ENCODE measurements at regions of chr1 and their contacts with region 1.

Region 1: DNA sequence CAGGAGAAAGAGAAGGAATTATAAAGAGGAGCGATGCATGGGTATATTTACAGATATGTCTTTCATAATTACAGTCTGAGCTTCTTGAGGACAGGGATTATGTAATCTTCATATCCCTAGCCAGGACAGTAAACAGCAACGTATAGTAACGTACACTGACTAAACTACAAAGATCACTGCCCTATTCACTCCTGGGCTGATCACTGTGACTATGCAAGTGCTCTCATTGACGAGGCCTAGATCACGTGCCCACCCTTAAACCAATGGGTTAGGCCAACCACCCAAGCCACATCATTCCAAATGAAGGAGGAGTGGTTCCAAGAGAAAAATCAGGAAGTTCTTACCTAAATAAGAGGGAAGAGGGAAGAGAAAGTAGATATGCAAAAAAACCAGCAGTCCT is 18.5 kb downstream of the PIK3R3 start:
- DNase-seq: no peak
- H3K4me3 ChIP-seq: no peak overlapping the region
- H3K27ac ChIP-seq: peak overlapping the region in 1 of 2 donors; percentile 8
- H3K4me1 ChIP-seq: no peaks in the 10 kb centered on the region
- H3K27me3 ChIP-seq: no peaks in the 10 kb centered on the region
- CTCF ChIP-seq: no peak
- POLR2A ChIP-seq: no peak

Region 2: DNA sequence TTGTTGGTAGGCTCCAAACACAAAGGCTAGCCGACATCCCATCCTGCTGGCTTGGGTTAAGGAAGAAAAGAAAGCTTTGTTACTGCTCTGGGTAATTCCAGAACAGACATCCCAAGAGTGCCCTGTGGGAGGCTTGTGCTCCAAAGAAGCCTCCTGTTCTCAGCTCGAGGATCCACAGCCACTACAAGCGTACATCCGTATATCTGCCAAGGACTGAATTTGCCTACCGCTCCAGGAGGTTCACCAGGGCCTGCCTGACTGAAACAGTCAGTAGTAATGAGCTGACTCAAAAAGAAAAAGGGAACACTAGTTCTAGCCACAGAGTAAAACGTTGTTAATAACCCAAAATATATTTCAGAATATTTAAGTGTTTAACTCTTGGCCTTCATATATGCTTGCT is 748.9 kb before region 1 on chr1:
- intact Hi-C with region 1: loop called (anchors 5 kb)
- DNase-seq: no peak
- H3K4me3 ChIP-seq: no peak overlapping the region
- H3K27ac ChIP-seq: peak overlapping the region in 1 of 2 donors; percentile 15
- H3K4me1 ChIP-seq: peaks cover 0 to 9% of the 10 kb centered on the region in 2 donors
- H3K27me3 ChIP-seq: no peaks in the 10 kb centered on the region
- CTCF ChIP-seq: no peak
- POLR2A ChIP-seq: no peak

Region 3: DNA sequence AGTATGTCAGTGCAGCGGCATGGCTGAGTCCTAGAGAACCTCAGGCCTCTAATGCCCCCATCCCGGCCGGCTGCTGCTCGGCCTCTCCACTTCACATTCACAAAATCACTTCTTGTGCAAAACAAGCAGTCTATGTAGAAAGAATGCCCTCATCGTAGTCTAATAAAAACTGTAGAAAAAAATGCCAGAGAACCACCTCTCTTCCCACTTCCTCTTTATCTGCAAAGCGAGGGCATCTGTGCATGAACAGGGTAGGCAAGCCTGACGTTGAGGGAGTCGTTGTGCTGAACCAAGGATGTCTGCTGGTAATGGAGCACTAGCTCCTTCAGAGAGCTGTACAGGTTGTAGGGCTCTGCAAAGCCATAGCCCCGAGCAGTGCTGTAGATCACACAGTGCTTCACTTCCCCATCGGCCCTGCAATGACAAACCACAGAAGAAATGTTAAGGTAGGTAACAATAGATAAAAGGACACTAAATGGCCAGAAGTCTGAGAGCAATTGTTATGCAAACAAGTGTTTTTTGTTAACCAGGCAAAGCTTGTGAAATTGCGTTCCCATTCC is 70.4 kb before region 1 on chr1:
- intact Hi-C with region 1: loop called (anchors 10 kb)
- DNase-seq: no peak
- H3K4me3 ChIP-seq: no peak overlapping the region
- H3K27ac ChIP-seq: no peak overlapping the region
- H3K4me1 ChIP-seq: no peaks in the 10 kb centered on the region
- H3K27me3 ChIP-seq: no peaks in the 10 kb centered on the region
- CTCF ChIP-seq: no peak
- POLR2A ChIP-seq: no peak

Measured in breast epithelium (tissue), 4 donors.